ENCODE measurements at regions of chr9 and their contacts with region 1.

Region 1: DNA sequence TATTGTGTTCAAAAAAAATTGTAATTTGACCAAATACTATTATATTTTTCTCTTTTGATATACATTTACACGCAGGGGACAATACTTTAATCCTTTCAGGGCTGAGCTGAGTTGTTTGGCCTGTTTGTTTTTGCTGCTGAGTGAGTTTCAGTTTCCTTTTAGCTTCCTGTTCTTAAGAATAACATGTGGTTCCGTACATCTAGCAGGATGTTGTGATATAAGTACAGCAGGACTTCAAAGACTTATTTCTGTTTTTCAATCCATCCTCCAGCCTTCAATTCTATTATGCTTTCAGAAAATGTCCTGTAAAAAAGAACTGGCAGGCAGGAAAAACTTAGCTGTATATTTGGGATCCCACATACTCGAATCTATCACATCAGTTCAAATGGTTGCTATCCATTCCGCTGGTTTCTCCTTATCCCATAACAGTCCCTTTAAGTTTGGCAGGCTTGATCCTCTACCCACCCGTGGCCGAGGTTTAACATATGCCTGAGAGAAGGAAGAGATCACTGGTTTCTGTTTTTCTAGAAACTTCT is 1037.3 kb upstream of the ACO1 start:
- DNase-seq: no peak
- H3K4me3 ChIP-seq: no peak overlapping the region
- H3K27me3 ChIP-seq: no peaks in the 10 kb centered on the region
- CTCF ChIP-seq: no peak

Region 2: GRCh38 chr9:31323726-31324444 is 23.3 kb before region 1 on chr9:
- CTCF ChIA-PET with region 1: no interaction called
- POLR2A ChIA-PET with region 1: interaction called, 21 read pairs
- DNase-seq: no peak
- H3K4me3 ChIP-seq: no peak overlapping the region
- H3K27me3 ChIP-seq: no peaks in the 10 kb centered on the region
- CTCF ChIP-seq: no peak

Region 3: GRCh38 chr9:31715250-31715649 is 368.1 kb after region 1 on chr9:
- CTCF ChIA-PET with region 1: no interaction called
- POLR2A ChIA-PET with region 1: no interaction called
- DNase-seq: no peak
- H3K4me3 ChIP-seq: no peak overlapping the region
- H3K27me3 ChIP-seq: no peaks in the 10 kb centered on the region
- CTCF ChIP-seq: no peak

Measured in BJ (cell line).